T-cell (primary cell): ENCODE measurements at regions of chr1 and their contacts with region 1.

Region 1: GRCh38 chr1:202144402-202145067 is at the start of gene ARL8A:
- DNase-seq: peak in 33 of 35 experiments; percentile 31 to 77 (median 54)
- ATAC-seq: peak; percentile 77 to 89 (median 84)
- H3K4me3 ChIP-seq: peak within 1 kb of the TSS; percentile 79 to 84
- H3K4me3 Mint-ChIP-seq: peak within 1 kb of the TSS; percentile 95 to 98 (median 98)
- H3K27ac ChIP-seq: peak within 1 kb of the TSS; percentile 67
- H3K27ac Mint-ChIP-seq: peak within 1 kb of the TSS; percentile 96 to 98
- H3K4me1 ChIP-seq: peaks cover 2 to 42% of the 10 kb centered on the region in 2 experiments
- H3K4me1 Mint-ChIP-seq: peaks cover 25 to 46% (median 35%) of the 10 kb centered on the region in 3 donors
- H3K27me3 ChIP-seq: no peaks in the 10 kb centered on the region
- H3K27me3 Mint-ChIP-seq: no peaks in the 10 kb centered on the region
- total RNA-seq, gene ARL8A: 37.8 to 70.2 (median 50.9) TPM

Region 2: DNA sequence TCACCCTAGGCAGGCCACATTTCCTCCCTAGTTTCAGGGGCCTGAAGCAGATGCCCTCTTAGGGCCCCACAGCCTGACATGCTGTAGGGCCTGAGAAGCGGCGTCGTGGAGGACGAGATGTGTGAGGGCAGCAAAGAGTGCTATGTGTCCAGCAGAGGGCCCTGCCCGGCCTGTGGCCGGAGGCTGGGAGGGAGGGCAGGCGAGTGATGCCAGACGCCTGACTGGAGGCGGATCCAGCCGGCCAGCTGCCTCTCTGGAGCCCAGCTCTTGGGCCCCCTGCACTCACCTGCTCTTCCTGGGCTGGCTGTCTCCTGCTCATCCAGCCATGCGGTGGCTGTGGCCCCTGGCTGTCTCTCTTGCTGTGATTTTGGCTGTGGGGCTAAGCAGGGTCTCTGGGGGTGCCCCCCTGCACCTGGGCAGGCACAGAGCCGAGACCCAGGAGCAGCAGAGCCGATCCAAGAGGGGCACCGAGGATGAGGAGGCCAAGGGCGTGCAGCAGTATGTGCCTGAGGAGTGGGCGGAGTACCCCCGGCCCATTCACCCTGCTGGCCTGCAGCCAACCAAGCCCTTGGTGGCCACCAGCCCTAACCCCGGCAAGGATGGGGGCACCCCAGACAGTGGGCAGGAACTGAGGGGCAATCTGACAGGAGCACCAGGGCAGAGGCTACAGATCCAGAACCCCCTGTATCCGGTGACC is 21.7 kb before region 1 on chr1 and contains the start of gene GPR37L1:
- CTCF ChIA-PET with region 1: no interaction called
- POLR2A ChIA-PET with region 1: no interaction called
- DNase-seq: no peak
- ATAC-seq: no peak
- H3K4me3 ChIP-seq: no peak within 1 kb of the TSS
- H3K4me3 Mint-ChIP-seq: no peak within 1 kb of the TSS
- H3K27ac ChIP-seq: no peak within 1 kb of the TSS
- H3K27ac Mint-ChIP-seq: no peak within 1 kb of the TSS
- H3K4me1 ChIP-seq: no peaks in the 10 kb centered on the region
- H3K4me1 Mint-ChIP-seq: peaks cover 0 to 2% (median 0%) of the 10 kb centered on the region in 3 donors
- H3K27me3 ChIP-seq: peaks cover 0 to 31% of the 10 kb centered on the region in 2 experiments
- H3K27me3 Mint-ChIP-seq: peaks cover 12 to 21% of the 10 kb centered on the region in 2 donors
- total RNA-seq, gene GPR37L1: not detected

Region 3: GRCh38 chr1:202154766-202155477 is 10.4 kb after region 1 on chr1:
- CTCF ChIA-PET with region 1: interaction called, 3 to 11 read pairs
- POLR2A ChIA-PET with region 1: interaction called in 1 of 2 experiments, 4 read pairs
- DNase-seq: peak in 30 of 35 experiments; percentile 32 to 77 (median 48)
- ATAC-seq: peak; percentile 59 to 73 (median 68)
- H3K4me3 ChIP-seq: no peak overlapping the region
- H3K4me3 Mint-ChIP-seq: no peak overlapping the region
- H3K27ac ChIP-seq: peak overlapping the region; percentile 53
- H3K27ac Mint-ChIP-seq: peak overlapping the region; percentile 85 to 89
- H3K4me1 ChIP-seq: peaks cover 20 to 59% of the 10 kb centered on the region in 2 experiments
- H3K4me1 Mint-ChIP-seq: peaks cover 50 to 61% (median 54%) of the 10 kb centered on the region in 3 donors
- H3K27me3 ChIP-seq: no peaks in the 10 kb centered on the region
- H3K27me3 Mint-ChIP-seq: no peaks in the 10 kb centered on the region

Region 4: DNA sequence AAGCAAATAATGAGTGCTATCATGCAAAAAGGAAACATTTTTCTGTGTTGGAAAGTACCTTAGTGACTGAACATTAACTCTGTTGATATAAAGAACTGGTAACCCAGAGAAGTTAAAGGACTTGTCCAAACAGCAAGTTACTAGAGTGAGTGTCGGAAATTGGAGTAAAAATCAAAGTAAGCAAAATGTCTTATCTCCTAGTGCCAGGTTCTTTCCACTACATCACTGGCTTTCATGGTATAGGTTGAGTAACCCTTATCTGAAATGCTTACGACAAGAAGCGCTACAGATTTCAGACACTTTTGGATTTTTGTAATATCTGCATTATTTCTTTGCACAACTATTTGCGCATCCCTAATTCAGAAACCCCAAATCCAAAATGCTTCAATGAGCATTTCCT is 760.8 kb after region 1 on chr1:
- CTCF ChIA-PET with region 1: no interaction called
- POLR2A ChIA-PET with region 1: no interaction called
- DNase-seq: no peak
- ATAC-seq: no peak
- H3K4me3 ChIP-seq: no peak overlapping the region
- H3K4me3 Mint-ChIP-seq: no peak overlapping the region
- H3K27ac ChIP-seq: no peak overlapping the region
- H3K27ac Mint-ChIP-seq: no peak overlapping the region
- H3K4me1 ChIP-seq: no peaks in the 10 kb centered on the region
- H3K4me1 Mint-ChIP-seq: no peaks in the 10 kb centered on the region
- H3K27me3 ChIP-seq: no peaks in the 10 kb centered on the region
- H3K27me3 Mint-ChIP-seq: no peaks in the 10 kb centered on the region